ENCODE measurements at regions of chr19 and their contacts with region 1.

Region 1: GRCh38 chr19:21482863-21483276 is 22.5 kb upstream of the ZNF429 start:
- DNase-seq: peak; percentile 82
- ATAC-seq: peak; percentile 90
- H3K4me3 Mint-ChIP-seq: no peak overlapping the region
- H3K27ac Mint-ChIP-seq: no peak overlapping the region
- H3K4me1 Mint-ChIP-seq: no peaks in the 10 kb centered on the region
- H3K27me3 Mint-ChIP-seq: no peaks in the 10 kb centered on the region

Region 2: DNA sequence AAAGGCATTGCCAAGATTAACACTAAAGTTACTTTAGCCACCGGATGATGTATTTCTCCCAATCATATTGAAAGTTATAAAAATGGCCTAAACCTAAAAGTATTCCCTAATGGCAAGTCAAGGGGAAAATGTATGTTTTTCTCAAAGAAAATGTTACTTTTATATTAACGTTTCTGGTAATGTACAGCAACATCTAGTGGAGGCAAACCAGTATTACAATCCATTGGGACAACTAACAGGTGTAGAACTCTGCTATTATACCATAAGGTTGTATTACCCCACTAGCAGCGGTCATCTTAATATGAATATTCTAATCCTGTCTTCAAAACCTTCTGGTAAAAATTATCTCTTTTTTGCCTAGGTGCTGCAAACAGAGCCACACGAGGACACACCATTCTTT is 215.3 kb after region 1 on chr19:
- CTCF ChIA-PET with region 1: no interaction called
- POLR2A ChIA-PET with region 1: no interaction called
- intact Hi-C with region 1: loop called (anchors 1 to 10 kb)
- DNase-seq: no peak
- ATAC-seq: no peak
- H3K4me3 Mint-ChIP-seq: no peak overlapping the region
- H3K27ac Mint-ChIP-seq: no peak overlapping the region
- H3K4me1 Mint-ChIP-seq: no peaks in the 10 kb centered on the region
- H3K27me3 Mint-ChIP-seq: no peaks in the 10 kb centered on the region

Region 3: GRCh38 chr19:22882792-22883191 is 1399.9 kb after region 1 on chr19:
- CTCF ChIA-PET with region 1: no interaction called
- POLR2A ChIA-PET with region 1: no interaction called
- intact Hi-C with region 1: loop called in 1 of 2 experiments (anchors 5 kb)
- DNase-seq: no peak
- ATAC-seq: no peak
- H3K4me3 Mint-ChIP-seq: no peak overlapping the region
- H3K27ac Mint-ChIP-seq: no peak overlapping the region
- H3K4me1 Mint-ChIP-seq: no peaks in the 10 kb centered on the region
- H3K27me3 Mint-ChIP-seq: no peaks in the 10 kb centered on the region